Activated CD4-positive, alpha-beta T cell treated with anti-CD3 and anti-CD28 coated beads, Interleukin-2, amount 10 ng/mL, durations not matched to agents 24 days and 14 days (primary cell): ENCODE measurements at regions of chr19 and their contacts with region 1.

Region 1: DNA sequence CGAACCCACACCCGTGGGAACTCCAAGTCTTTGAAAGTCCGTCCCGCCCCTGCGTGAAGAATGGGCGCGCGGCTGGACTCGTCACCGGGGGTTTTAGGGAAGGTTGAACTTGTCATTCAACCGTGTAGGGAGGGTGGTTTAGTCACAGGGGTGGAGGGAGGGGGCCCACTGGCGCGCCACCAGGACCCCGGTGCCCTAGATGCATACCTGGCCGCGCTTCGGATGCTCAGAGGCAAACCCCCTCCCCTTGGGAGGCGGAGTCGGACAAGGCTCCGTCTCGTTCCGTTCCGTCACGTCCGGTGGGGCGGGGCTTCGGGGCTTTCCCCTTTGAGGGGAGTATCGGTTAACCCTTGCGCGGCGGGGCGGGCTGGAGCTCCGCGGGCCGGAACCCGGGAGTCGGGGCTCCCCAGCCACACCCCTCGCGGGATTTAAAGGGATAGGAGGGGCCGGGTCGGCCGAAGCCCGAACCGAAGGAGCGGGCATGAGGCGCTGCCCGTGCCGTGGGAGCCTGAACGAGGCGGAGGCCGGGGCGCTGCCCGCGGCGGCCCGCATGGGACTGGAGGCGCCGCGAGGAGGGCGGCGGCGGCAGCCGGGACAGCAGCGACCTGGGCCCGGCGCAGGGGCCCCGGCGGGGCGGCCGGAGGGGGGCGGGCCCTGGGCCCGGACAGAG is at the starts of genes COQ8B and ITPKC:
- DNase-seq: peak; percentile 100
- H3K4me3 Mint-ChIP-seq: peak within 1 kb of the TSS; percentile 90
- H3K27ac Mint-ChIP-seq: peak within 1 kb of the TSS; percentile 94
- H3K4me1 Mint-ChIP-seq: peaks cover 52% of the 10 kb centered on the region
- H3K27me3 Mint-ChIP-seq: no peaks in the 10 kb centered on the region
- total RNA-seq, gene COQ8B: 32.5 and 33.4 TPM in 2 replicates
- total RNA-seq, gene ITPKC: 7.7 and 8.6 TPM in 2 replicates

Region 2: GRCh38 chr19:40425450-40426287 is 291.1 kb before region 1 on chr19 and contains the start of gene SERTAD1:
- intact Hi-C with region 1: loop called (anchors 5 kb)
- DNase-seq: peak; percentile 100
- H3K4me3 Mint-ChIP-seq: peak within 1 kb of the TSS; percentile 92
- H3K27ac Mint-ChIP-seq: peak within 1 kb of the TSS; percentile 91
- H3K4me1 Mint-ChIP-seq: peaks cover 26% of the 10 kb centered on the region
- H3K27me3 Mint-ChIP-seq: peaks cover 5% of the 10 kb centered on the region
- total RNA-seq, gene SERTAD1: 19.3 and 20.8 TPM in 2 replicates

Region 3: GRCh38 chr19:40609561-40610395 is 107.0 kb before region 1 on chr19:
- intact Hi-C with region 1: loop called (anchors 10 kb)
- DNase-seq: peak; percentile 97
- H3K4me3 Mint-ChIP-seq: peak overlapping the region; percentile 95
- H3K27ac Mint-ChIP-seq: peak overlapping the region; percentile 97
- H3K4me1 Mint-ChIP-seq: peaks cover 43% of the 10 kb centered on the region
- H3K27me3 Mint-ChIP-seq: no peaks in the 10 kb centered on the region

Region 4: DNA sequence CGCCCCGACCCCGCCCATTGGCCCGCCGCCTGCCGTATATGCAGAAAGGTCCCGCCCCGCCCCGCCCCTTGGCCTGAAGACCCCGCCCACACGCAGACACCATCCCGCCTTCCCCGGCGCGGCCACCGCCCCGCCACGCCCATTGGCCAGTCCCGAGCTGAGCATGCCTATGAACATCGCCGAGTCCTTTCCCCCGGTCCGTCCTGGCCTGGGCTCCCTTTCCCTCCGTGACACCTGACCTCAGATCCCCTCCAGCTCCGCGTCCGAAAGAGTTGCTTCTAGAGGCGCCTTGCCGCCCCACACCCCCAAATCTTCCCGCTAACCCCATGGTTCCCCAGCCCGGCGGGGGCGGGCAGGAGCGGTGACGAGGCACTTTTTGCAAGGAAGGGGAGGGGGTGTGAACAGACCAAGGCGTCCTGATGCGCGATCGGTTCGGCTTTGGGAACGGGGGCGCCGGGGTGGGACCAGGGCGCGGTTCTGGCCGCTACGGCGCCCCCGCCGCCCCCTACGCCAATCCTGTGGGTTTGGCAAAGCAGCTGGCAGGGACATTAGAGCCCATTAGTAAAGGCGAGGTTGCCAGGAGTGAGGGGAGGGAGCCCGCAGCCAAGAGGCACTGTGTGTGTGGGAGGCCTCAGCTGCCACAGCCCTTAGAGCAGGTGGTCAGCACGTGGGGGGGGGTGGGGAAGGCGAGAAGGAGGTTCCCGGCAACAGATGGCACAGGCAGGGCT is 25.9 kb before region 1 on chr19:
- intact Hi-C with region 1: loop called (anchors 1 kb)
- DNase-seq: peak; percentile 95
- H3K4me3 Mint-ChIP-seq: peak overlapping the region; percentile 91
- H3K27ac Mint-ChIP-seq: peak overlapping the region; percentile 94
- H3K4me1 Mint-ChIP-seq: peaks cover 4% of the 10 kb centered on the region
- H3K27me3 Mint-ChIP-seq: no peaks in the 10 kb centered on the region

Region 5: GRCh38 chr19:40750059-40750873 is 33.5 kb after region 1 on chr19 and contains the start of gene ACTMAP:
- intact Hi-C with region 1: loop called (anchors 1 kb)
- DNase-seq: peak; percentile 100
- H3K4me3 Mint-ChIP-seq: peak within 1 kb of the TSS; percentile 92
- H3K27ac Mint-ChIP-seq: peak within 1 kb of the TSS; percentile 100
- H3K4me1 Mint-ChIP-seq: peaks cover 37% of the 10 kb centered on the region
- H3K27me3 Mint-ChIP-seq: no peaks in the 10 kb centered on the region
- total RNA-seq, gene ACTMAP: 8.6 and 9.4 TPM in 2 replicates

Region 6: GRCh38 chr19:40777937-40778705 is 61.3 kb after region 1 on chr19 and contains the start of gene RAB4B:
- intact Hi-C with region 1: loop called (anchors 1 kb)
- DNase-seq: peak; percentile 100
- H3K4me3 Mint-ChIP-seq: peak within 1 kb of the TSS; percentile 94
- H3K27ac Mint-ChIP-seq: peak within 1 kb of the TSS; percentile 96
- H3K4me1 Mint-ChIP-seq: peaks cover 53% of the 10 kb centered on the region
- H3K27me3 Mint-ChIP-seq: no peaks in the 10 kb centered on the region
- total RNA-seq, gene RAB4B: 36.3 and 41.0 TPM in 2 replicates

Region 7: DNA sequence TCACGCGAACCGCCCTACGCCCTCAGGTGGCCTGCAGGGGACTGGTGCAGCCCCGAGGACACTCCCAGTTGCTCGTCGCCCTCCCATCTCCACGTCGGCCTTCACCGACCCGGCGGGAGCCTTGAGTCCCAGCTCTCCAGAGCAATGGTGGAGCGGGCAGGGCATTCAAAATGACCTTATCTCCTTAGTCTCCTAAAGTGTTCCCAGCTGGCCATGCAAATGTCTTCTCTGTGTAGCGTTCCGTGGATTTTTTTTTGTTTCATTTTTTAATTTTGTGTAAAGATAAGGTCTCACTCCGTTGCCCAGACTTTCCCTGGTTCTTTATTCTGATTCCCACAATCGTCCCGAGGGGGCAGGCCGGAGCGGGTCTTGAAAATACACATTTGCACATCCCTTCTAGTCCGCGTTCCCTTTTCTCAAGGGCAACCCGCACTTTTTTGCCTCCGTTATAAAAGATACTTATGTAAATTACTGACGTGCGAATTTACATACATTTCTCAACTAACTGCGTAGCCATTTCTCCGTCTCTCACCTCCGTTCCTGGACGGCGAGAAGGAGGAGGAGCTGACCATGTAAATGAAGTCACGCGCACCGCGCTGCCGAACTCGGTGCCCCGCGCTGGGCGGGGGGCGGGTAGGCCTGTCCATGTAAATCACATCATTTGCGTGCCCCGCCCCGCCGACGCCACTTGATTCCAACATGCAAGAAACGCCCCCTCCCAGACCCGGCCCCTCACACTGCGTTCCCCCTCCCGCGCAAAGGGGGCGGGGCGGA is 81.6 kb after region 1 on chr19:
- intact Hi-C with region 1: loop called (anchors 1 kb)
- DNase-seq: peak; percentile 100
- H3K4me3 Mint-ChIP-seq: peak overlapping the region; percentile 89
- H3K27ac Mint-ChIP-seq: peak overlapping the region; percentile 95
- H3K4me1 Mint-ChIP-seq: peaks cover 51% of the 10 kb centered on the region
- H3K27me3 Mint-ChIP-seq: no peaks in the 10 kb centered on the region